ENCODE measurements at regions of chr17 and their contacts with region 1.

Region 1: GRCh38 chr17:1992541-1992940 is 32.6 kb downstream of the RTN4RL1 start:
- DNase-seq: no peak
- H3K4me3 ChIP-seq: no peak overlapping the region
- H3K27ac ChIP-seq: no peak overlapping the region
- H3K4me1 ChIP-seq: peaks cover 0 to 14% (median 5%) of the 10 kb centered on the region in 4 experiments; a peak in 5 of 7 replicates
- H3K27me3 ChIP-seq: peaks cover 0 to 8% (median 3%) of the 10 kb centered on the region in 4 experiments; a peak in 4 of 7 replicates
- CTCF ChIP-seq: no peak
- EP300 ChIP-seq: no peak
- POLR2A ChIP-seq: no peak
- RAD21 ChIP-seq: no peak

Region 2: DNA sequence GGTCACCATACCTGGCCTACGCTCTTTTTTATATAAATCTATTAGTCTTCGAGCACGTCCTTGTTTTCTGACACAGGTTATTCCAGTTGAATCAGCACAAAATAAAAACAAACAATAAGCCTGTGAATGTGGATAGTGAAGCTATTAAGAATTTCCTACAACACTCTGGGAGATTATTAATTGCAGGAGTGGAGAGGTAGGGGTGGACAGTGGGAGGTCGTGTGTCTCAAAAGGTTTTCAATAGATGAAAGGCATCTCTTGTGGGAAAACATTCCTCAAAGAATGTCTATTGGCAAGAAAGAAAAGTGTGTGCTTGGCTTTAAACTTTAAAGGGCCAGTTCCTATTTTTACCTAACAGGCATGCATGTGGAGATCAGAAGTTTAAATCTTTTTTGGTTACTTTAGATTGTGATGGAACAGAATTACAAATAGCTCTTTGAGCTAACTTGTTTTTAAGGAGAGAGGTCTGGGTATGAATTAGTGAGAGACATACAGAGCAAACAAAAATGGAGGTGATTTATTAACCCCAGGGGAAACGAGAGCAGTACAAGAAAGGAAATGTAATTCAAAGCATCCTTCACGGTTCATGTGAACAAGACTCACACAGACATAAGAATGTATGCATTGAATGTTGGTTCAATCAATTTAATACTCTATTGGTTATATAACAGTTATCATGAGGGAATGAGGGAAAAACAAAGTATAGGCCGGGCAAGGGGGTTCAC is 171.9 kb before region 1 on chr17:
- CTCF ChIA-PET with region 1: no interaction called
- POLR2A ChIA-PET with region 1: no interaction called
- DNase-seq: no peak
- H3K4me3 ChIP-seq: no peak overlapping the region
- H3K27ac ChIP-seq: no peak overlapping the region
- H3K4me1 ChIP-seq: no peaks in the 10 kb centered on the region
- H3K27me3 ChIP-seq: no peaks in the 10 kb centered on the region
- CTCF ChIP-seq: no peak
- EP300 ChIP-seq: no peak
- POLR2A ChIP-seq: no peak
- RAD21 ChIP-seq: no peak

Region 3: GRCh38 chr17:1980665-1981250 is 11.8 kb before region 1 on chr17:
- CTCF ChIA-PET with region 1: interaction called, 12 read pairs
- POLR2A ChIA-PET with region 1: no interaction called
- DNase-seq: no peak
- H3K4me3 ChIP-seq: no peak overlapping the region
- H3K27ac ChIP-seq: no peak overlapping the region
- H3K4me1 ChIP-seq: peaks cover 0 to 8% (median 0%) of the 10 kb centered on the region in 4 experiments; a peak in 4 of 7 replicates
- H3K27me3 ChIP-seq: peaks cover 0 to 17% (median 9%) of the 10 kb centered on the region in 4 experiments; a peak in 4 of 7 replicates
- CTCF ChIP-seq: no peak
- EP300 ChIP-seq: no peak
- POLR2A ChIP-seq: no peak
- RAD21 ChIP-seq: no peak